ENCODE measurements at regions of chr10 and their contacts with region 1.

Region 1: GRCh38 chr10:104308439-104308903 is 29.8 kb downstream of the ITPRIP start:
- DNase-seq: peak; percentile 49 to 57 (median 51)
- H3K4me3 ChIP-seq: no peak overlapping the region
- H3K4me3 Mint-ChIP-seq: peak overlapping the region; percentile 8 to 84 (median 64)
- H3K27ac ChIP-seq: no peak overlapping the region
- H3K27ac Mint-ChIP-seq: peak overlapping the region; percentile 49 to 92 (median 82)
- H3K4me1 ChIP-seq: peaks cover 60% of the 10 kb centered on the region
- H3K4me1 Mint-ChIP-seq: peaks cover 42 to 82% (median 62%) of the 10 kb centered on the region in 4 donors
- H3K27me3 ChIP-seq: no peaks in the 10 kb centered on the region
- H3K27me3 Mint-ChIP-seq: no peaks in the 10 kb centered on the region

Region 2: GRCh38 chr10:104284846-104285245 is 23.6 kb before region 1 on chr10:
- CTCF ChIA-PET with region 1: interaction called, 163 read pairs
- POLR2A ChIA-PET with region 1: no interaction called
- intact Hi-C with region 1: no loop called
- DNase-seq: no peak
- H3K4me3 ChIP-seq: no peak overlapping the region
- H3K4me3 Mint-ChIP-seq: no peak overlapping the region
- H3K27ac ChIP-seq: no peak overlapping the region
- H3K27ac Mint-ChIP-seq: no peak overlapping the region
- H3K4me1 ChIP-seq: no peaks in the 10 kb centered on the region
- H3K4me1 Mint-ChIP-seq: no peaks in the 10 kb centered on the region
- H3K27me3 ChIP-seq: no peaks in the 10 kb centered on the region
- H3K27me3 Mint-ChIP-seq: peaks cover 7 to 12% of the 10 kb centered on the region in 2 donors

Region 3: DNA sequence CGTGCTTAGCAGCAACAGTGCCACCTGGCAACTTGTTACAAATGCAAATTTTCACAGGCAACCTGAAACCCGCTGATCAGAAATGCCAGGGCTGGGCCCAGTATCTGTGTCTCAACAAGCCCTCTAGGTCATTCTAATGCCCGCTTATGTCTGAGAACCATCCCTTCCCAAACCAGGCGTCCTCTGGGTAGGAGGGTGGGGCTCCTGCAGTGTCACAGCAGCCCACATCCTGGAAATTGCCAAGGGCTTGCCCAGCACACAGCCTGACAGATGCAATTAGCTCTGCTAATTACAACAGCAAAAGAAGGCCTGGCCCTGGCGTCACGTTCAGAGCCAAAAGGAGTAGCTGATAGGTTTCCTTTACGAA is 13.9 kb after region 1 on chr10:
- CTCF ChIA-PET with region 1: interaction called, 62 read pairs
- POLR2A ChIA-PET with region 1: interaction called, 72 read pairs
- intact Hi-C with region 1: loop called (anchors 1 kb)
- DNase-seq: peak in 2 of 5 donors; percentile 38 to 61
- H3K4me3 ChIP-seq: peak overlapping the region; percentile 31 to 42
- H3K4me3 Mint-ChIP-seq: peak overlapping the region; percentile 72 to 86 (median 81)
- H3K27ac ChIP-seq: peak overlapping the region; percentile 31
- H3K27ac Mint-ChIP-seq: peak overlapping the region; percentile 94 to 98 (median 95)
- H3K4me1 ChIP-seq: peaks cover 84% of the 10 kb centered on the region
- H3K4me1 Mint-ChIP-seq: peaks cover 63 to 100% (median 87%) of the 10 kb centered on the region in 4 donors
- H3K27me3 ChIP-seq: no peaks in the 10 kb centered on the region
- H3K27me3 Mint-ChIP-seq: no peaks in the 10 kb centered on the region

Region 4: DNA sequence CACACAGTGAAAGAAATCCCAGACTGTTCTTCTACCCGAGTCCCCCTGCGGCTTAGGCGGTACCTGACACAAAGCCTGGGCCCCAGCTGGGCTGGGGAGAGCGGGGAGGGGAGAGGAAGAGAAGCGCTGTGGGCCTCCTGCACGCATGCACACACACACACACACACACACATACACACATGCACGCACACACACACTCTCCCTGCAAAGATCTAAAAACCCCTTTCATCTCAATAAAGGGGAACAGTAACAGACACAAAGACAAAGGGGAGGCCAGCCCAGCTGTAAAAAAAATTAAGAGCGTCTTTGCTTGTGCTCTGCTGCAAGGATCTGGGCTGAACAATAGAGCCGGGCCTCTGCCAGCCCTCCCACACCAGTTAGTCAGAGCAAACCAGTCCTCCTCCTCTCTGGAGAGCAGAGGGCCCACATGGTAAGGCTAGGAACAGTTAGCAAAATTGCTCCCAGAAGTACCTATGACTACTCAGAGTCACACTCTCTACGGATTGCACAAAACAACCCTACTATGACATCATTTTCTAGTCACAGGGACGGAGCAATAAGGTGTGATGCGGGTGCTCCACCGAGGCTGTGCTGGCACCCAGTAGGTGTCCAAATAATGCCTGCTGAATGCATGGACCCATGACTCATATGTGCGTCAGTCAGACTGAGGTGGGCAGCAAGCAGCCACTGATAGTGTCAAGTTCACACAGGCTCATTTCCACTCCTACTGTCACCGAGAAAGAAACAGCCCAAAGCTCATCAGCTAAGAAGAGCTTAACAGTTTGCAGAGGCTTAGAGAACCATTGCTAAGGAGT is 20.6 kb after region 1 on chr10:
- CTCF ChIA-PET with region 1: interaction called, 100 read pairs
- POLR2A ChIA-PET with region 1: interaction called, 126 read pairs
- intact Hi-C with region 1: loop called (anchors 2 kb)
- DNase-seq: peak; percentile 73 to 96 (median 77)
- H3K4me3 ChIP-seq: peak overlapping the region; percentile 26 to 32
- H3K4me3 Mint-ChIP-seq: peak overlapping the region; percentile 75 to 90 (median 82)
- H3K27ac ChIP-seq: peak overlapping the region; percentile 64
- H3K27ac Mint-ChIP-seq: peak overlapping the region; percentile 89 to 98 (median 96)
- H3K4me1 ChIP-seq: peaks cover 100% of the 10 kb centered on the region
- H3K4me1 Mint-ChIP-seq: peaks cover 68 to 100% (median 93%) of the 10 kb centered on the region in 4 donors
- H3K27me3 ChIP-seq: no peaks in the 10 kb centered on the region
- H3K27me3 Mint-ChIP-seq: no peaks in the 10 kb centered on the region

Region 5: GRCh38 chr10:104345941-104346340 is 37.5 kb after region 1 on chr10:
- CTCF ChIA-PET with region 1: interaction called, 449 read pairs
- POLR2A ChIA-PET with region 1: interaction called, 74 read pairs
- intact Hi-C with region 1: loop called (anchors 1 kb)
- DNase-seq: no peak
- H3K4me3 ChIP-seq: no peak overlapping the region
- H3K4me3 Mint-ChIP-seq: peak overlapping the region in 2 of 8 donors; percentile 49 to 74
- H3K27ac ChIP-seq: no peak overlapping the region
- H3K27ac Mint-ChIP-seq: peak overlapping the region in 5 of 7 donors; percentile 13 to 83 (median 72)
- H3K4me1 ChIP-seq: peaks cover 14% of the 10 kb centered on the region
- H3K4me1 Mint-ChIP-seq: peaks cover 10 to 19% (median 13%) of the 10 kb centered on the region in 4 donors
- H3K27me3 ChIP-seq: no peaks in the 10 kb centered on the region
- H3K27me3 Mint-ChIP-seq: no peaks in the 10 kb centered on the region

Region 6: GRCh38 chr10:104353325-104354048 is 45.0 kb after region 1 on chr10 and contains the start of gene CFAP58:
- CTCF ChIA-PET with region 1: interaction called, 449 read pairs
- POLR2A ChIA-PET with region 1: interaction called, 74 read pairs
- intact Hi-C with region 1: loop called (anchors 1 kb)
- DNase-seq: peak; percentile 87 to 91 (median 88)
- H3K4me3 ChIP-seq: peak within 1 kb of the TSS; percentile 17 to 58
- H3K4me3 Mint-ChIP-seq: peak within 1 kb of the TSS in 3 of 8 donors; percentile 41 to 72 (median 61)
- H3K27ac ChIP-seq: peak within 1 kb of the TSS; percentile 18
- H3K27ac Mint-ChIP-seq: peak within 1 kb of the TSS in 4 of 7 donors; percentile 34 to 66 (median 46)
- H3K4me1 ChIP-seq: peaks cover 33% of the 10 kb centered on the region
- H3K4me1 Mint-ChIP-seq: peaks cover 0 to 19% (median 14%) of the 10 kb centered on the region in 4 donors
- H3K27me3 ChIP-seq: no peaks in the 10 kb centered on the region
- H3K27me3 Mint-ChIP-seq: no peaks in the 10 kb centered on the region
- total RNA-seq, gene CFAP58: not detected

Measured in CD4-positive, alpha-beta memory T cell (primary cell).